A673 (cell line): ENCODE measurements at regions of chr7 and their contacts with region 1.

Region 1: GRCh38 chr7:133992153-133992552 is 135.0 kb upstream of the LRGUK start:
- DNase-seq: no peak
- H3K4me3 ChIP-seq: no peak overlapping the region
- H3K27ac ChIP-seq: no peak overlapping the region
- H3K4me1 ChIP-seq: no peaks in the 10 kb centered on the region
- H3K27me3 ChIP-seq: no peaks in the 10 kb centered on the region
- CTCF ChIP-seq: no peak

Region 2: DNA sequence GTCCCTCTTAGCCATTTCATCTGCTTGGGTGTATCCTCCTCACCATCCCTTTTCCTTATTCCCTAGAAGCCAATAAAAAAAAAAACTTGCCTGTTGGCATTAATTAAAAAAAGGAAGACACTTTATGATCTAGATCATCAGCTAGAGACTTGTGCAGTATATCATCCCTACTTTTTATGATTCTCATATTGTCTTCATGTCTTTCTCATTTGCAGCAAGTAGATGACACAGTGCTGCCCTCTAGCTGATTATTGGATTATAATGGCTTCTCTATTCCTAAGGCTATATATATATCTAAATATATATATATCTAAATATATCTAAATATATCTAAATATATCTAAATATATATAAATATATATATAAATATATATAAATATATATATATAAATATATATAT is 137.4 kb before region 1 on chr7:
- CTCF ChIA-PET with region 1: no interaction called
- POLR2A ChIA-PET with region 1: no interaction called
- intact Hi-C with region 1: loop called (anchors 5 kb)
- DNase-seq: peak; percentile 71
- H3K4me3 ChIP-seq: no peak overlapping the region
- H3K27ac ChIP-seq: no peak overlapping the region
- H3K4me1 ChIP-seq: peaks cover 5% of the 10 kb centered on the region
- H3K27me3 ChIP-seq: no peaks in the 10 kb centered on the region
- CTCF ChIP-seq: peak; percentile 62